ENCODE measurements at regions of chr11 and their contacts with region 1.

Region 1: GRCh38 chr11:70763606-70764005 is 365.3 kb downstream of the CTTN start:
- DNase-seq: no peak
- ATAC-seq: no peak
- H3K4me3 ChIP-seq: no peak overlapping the region
- H3K27ac ChIP-seq: no peak overlapping the region
- H3K4me1 ChIP-seq: no peaks in the 10 kb centered on the region
- H3K27me3 ChIP-seq: no peaks in the 10 kb centered on the region
- CTCF ChIP-seq: no peak
- POLR2A ChIP-seq: no peak

Region 2: GRCh38 chr11:70467201-70468085 is 296.2 kb before region 1 on chr11:
- intact Hi-C with region 1: loop called in 1 of 2 experiments (anchors 10 kb)
- DNase-seq: peak in 1 of 3 donors; percentile 61
- ATAC-seq: peak; percentile 68 to 86 (median 78)
- H3K4me3 ChIP-seq: no peak overlapping the region
- H3K27ac ChIP-seq: no peak overlapping the region
- H3K4me1 ChIP-seq: no peaks in the 10 kb centered on the region
- H3K27me3 ChIP-seq: no peaks in the 10 kb centered on the region
- CTCF ChIP-seq: peak; percentile 84 to 88 (median 87)
- POLR2A ChIP-seq: no peak

Region 3: GRCh38 chr11:70503458-70504221 is 260.0 kb before region 1 on chr11:
- intact Hi-C with region 1: no loop called
- DNase-seq: peak in 2 of 3 donors; percentile 5 to 32
- ATAC-seq: no peak
- H3K4me3 ChIP-seq: no peak overlapping the region
- H3K27ac ChIP-seq: no peak overlapping the region
- H3K4me1 ChIP-seq: no peaks in the 10 kb centered on the region
- H3K27me3 ChIP-seq: no peaks in the 10 kb centered on the region
- CTCF ChIP-seq: no peak
- POLR2A ChIP-seq: no peak

Region 4: GRCh38 chr11:70788248-70789022 is 24.8 kb after region 1 on chr11:
- intact Hi-C with region 1: no loop called
- DNase-seq: no peak
- ATAC-seq: peak in 1 of 4 donors; percentile 19
- H3K4me3 ChIP-seq: no peak overlapping the region
- H3K27ac ChIP-seq: no peak overlapping the region
- H3K4me1 ChIP-seq: peaks cover 0 to 11% (median 3%) of the 10 kb centered on the region in 4 donors
- H3K27me3 ChIP-seq: no peaks in the 10 kb centered on the region
- CTCF ChIP-seq: no peak
- POLR2A ChIP-seq: no peak